Endothelial cell of umbilical vein (primary cell): ENCODE measurements at regions of chr2 and their contacts with region 1.

Region 1: DNA sequence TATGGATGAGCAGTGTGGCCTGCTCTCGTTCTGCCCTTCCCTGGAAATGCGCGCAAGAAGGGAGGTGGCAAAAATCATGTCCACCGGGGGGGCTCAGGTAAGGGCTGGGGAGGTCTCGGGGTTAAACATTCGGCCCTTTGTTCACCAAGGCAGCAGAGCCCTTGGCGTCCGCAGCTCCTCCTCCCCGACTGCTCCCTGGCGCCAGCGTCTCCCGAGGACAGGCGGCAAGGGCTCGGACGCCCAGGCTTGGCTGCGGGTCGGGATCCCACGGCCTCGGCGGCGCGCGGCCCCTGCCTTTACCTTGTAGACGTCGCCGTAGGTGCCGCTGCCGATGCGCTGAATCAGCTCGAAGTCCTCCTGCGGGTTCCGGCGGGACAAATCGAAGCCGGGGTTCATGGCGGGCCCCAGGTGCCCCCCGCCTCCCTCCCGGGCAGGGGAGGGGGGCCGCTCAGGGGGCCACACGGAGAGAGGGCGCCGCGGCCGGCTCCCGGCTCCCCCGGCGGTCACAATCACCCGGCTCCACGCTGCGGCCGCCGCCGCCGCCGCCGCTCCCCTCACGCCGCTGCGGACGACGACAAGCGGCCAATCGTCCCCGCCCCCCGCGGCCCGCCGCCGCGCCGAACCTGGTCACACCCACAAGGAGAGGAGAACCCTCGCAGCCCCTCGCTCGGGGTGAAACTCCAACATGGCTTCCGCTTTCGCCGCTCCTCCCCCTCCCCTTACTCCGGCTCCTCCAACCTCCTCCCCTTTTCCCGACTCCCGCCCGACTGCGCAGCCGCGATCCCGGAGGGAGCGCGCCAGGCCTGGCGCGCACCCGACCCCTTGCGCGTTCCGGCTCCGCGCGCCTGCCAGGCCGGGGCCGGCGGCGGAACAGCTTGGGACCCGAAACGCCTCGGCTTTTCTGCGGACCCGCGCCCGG is at the start of gene MAP4K3:
- DNase-seq: peak; percentile 95
- H3K4me3 ChIP-seq: peak within 1 kb of the TSS; percentile 48 to 83 (median 56)
- H3K27ac ChIP-seq: peak within 1 kb of the TSS; percentile 73
- H3K4me1 ChIP-seq: peaks cover 35% of the 10 kb centered on the region
- H3K27me3 ChIP-seq: no peaks in the 10 kb centered on the region
- CTCF ChIP-seq: no peak
- POLR2A ChIP-seq: peak; percentile 59
- total RNA-seq, gene MAP4K3: 45.9 and 46.2 TPM in 2 replicates

Region 2: DNA sequence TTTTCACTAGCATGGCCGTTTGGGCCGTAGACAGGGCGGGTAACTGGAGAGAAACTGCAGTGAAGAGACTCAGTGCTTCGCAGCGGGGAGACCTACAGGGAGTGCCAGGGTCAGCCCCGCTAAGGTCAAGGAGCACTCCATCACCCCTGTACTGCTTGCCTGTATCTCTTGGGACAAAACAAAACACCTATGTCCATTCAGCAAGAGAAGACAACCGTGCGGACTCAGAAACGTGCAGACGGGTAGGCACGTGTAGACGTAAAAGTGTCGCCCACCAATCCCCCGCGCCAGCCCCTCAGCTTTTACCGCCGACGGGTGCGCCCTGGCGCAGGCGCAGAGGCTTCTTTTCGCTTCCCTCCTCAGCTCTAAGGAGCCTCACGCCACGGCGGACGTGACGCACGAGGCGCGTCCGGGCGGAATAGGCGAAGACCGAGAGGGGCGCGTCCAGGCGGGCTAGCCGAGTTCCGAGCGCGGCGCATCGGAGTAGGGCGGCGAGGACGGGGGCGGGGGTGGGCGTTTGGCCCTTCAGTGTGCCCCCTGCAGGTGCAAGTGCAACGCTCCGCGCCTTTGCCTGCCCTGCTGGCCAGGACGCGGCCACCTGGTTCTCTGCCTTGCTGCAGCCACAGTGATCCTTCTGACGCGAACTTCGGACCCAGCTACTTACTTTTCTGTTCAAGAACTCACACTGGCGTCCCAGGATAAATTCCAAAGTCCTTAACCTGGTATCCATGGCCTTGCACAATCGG is 312.7 kb before region 1 on chr2:
- CTCF ChIA-PET with region 1: no interaction called
- POLR2A ChIA-PET with region 1: no interaction called
- dilution Hi-C with region 1: no loop called
- intact Hi-C with region 1: loop called (anchors 5 kb)
- DNase-seq: peak; percentile 97
- H3K4me3 ChIP-seq: peak overlapping the region; percentile 53 to 96 (median 89)
- H3K27ac ChIP-seq: peak overlapping the region; percentile 45
- H3K4me1 ChIP-seq: peaks cover 18% of the 10 kb centered on the region
- H3K27me3 ChIP-seq: no peaks in the 10 kb centered on the region
- CTCF ChIP-seq: peak; percentile 28 to 86
- POLR2A ChIP-seq: peak; percentile 96

Region 3: DNA sequence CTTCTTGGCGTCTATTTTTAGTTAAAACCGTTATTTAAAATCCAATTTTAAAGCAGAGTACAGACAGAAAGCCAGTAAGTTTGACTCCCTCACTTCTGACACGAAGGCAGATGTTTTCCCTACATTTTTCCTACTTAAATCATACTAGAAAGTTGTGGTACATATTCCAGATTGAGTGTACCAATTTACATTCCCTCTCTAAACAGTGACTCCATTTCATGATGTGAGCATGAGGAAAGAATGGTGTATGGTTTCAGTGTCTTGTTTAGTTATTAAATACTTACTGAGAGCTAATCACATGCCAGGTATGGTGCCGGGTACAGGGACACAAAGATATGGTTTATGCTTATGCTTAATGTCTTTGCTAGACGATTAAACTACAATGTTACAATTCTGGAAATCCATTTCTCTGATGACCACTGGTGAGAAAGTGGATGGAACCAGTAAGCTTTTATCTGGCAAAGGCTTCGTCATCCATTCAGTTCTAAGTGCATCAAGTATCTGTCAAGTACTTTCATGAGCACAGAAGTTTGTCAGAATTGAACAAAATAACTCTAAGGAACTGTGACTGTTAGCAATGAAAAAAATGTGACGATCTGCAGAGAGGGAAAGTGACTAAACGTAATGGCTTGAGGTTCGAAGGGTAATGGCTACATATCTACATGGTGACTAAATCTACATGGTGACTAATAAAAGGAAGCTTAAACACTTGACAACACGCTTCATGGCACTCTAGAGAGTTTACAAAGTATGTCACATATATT is 25.5 kb before region 1 on chr2:
- CTCF ChIA-PET with region 1: interaction called, 5 read pairs
- POLR2A ChIA-PET with region 1: no interaction called
- dilution Hi-C with region 1: no loop called
- intact Hi-C with region 1: loop called (anchors 1 kb)
- DNase-seq: peak; percentile 71
- H3K4me3 ChIP-seq: peak overlapping the region in 1 of 3 experiments; percentile 34
- H3K27ac ChIP-seq: peak overlapping the region; percentile 43
- H3K4me1 ChIP-seq: peaks cover 36% of the 10 kb centered on the region
- H3K27me3 ChIP-seq: no peaks in the 10 kb centered on the region
- CTCF ChIP-seq: no peak
- POLR2A ChIP-seq: no peak

Region 4: GRCh38 chr2:39469807-39470206 is 33.0 kb after region 1 on chr2:
- CTCF ChIA-PET with region 1: interaction called, 6 read pairs
- POLR2A ChIA-PET with region 1: no interaction called
- dilution Hi-C with region 1: no loop called
- intact Hi-C with region 1: loop called (anchors 1 kb)
- DNase-seq: peak; percentile 73
- H3K4me3 ChIP-seq: no peak overlapping the region
- H3K27ac ChIP-seq: peak overlapping the region; percentile 49
- H3K4me1 ChIP-seq: peaks cover 36% of the 10 kb centered on the region
- H3K27me3 ChIP-seq: no peaks in the 10 kb centered on the region
- CTCF ChIP-seq: no peak
- POLR2A ChIP-seq: no peak

Region 5: DNA sequence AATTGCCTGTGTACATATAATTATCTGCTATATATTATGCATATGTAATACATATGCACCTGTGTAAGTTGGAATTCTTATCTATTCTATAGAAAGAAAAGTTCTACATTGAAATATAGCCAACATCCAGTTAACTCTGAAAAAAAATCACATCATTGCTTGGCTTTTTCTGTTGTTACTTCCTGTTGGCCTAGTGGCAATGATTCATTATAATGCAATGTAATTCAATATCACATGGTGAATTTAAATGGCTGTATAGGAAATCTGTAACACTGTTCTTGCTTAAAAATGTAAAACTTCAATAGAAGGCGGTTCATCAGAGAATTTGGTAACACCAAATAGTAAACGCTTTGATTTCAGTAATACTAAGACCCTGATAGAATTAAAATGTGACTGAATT is 44.8 kb after region 1 on chr2:
- CTCF ChIA-PET with region 1: interaction called, 3 read pairs
- POLR2A ChIA-PET with region 1: no interaction called
- dilution Hi-C with region 1: no loop called
- intact Hi-C with region 1: loop called (anchors 1 kb)
- DNase-seq: peak; percentile 78
- H3K4me3 ChIP-seq: peak overlapping the region in 1 of 3 experiments; percentile 13
- H3K27ac ChIP-seq: peak overlapping the region; percentile 84
- H3K4me1 ChIP-seq: peaks cover 46% of the 10 kb centered on the region
- H3K27me3 ChIP-seq: no peaks in the 10 kb centered on the region
- CTCF ChIP-seq: no peak
- POLR2A ChIP-seq: no peak

Region 6: GRCh38 chr2:39568561-39569006 is 131.7 kb after region 1 on chr2:
- CTCF ChIA-PET with region 1: no interaction called
- POLR2A ChIA-PET with region 1: no interaction called
- dilution Hi-C with region 1: no loop called
- intact Hi-C with region 1: loop called (anchors 1 kb)
- DNase-seq: peak; percentile 89
- H3K4me3 ChIP-seq: peak overlapping the region in 1 of 3 experiments; percentile 11
- H3K27ac ChIP-seq: peak overlapping the region; percentile 83
- H3K4me1 ChIP-seq: peaks cover 20% of the 10 kb centered on the region
- H3K27me3 ChIP-seq: no peaks in the 10 kb centered on the region
- CTCF ChIP-seq: no peak
- POLR2A ChIP-seq: no peak

Region 7: DNA sequence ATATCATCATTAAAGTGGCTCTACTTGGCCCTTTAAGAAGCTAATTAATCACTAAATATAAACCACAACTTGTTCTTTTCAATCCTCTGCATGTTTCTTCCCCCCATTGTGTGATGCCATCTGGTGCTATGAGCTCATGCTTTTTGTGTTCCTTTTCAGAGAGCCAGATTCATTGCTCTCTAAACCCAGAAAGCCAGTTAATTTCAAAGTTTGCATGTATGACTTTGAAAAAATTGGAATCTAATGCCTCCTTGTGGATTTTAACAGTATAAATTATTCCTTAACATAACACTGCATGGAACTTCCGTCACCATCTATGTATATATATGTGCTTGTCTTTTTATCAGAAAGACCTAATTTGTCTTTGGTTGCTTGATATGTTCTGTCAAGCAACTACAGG is 260.0 kb after region 1 on chr2:
- CTCF ChIA-PET with region 1: interaction called, 10 read pairs
- POLR2A ChIA-PET with region 1: no interaction called
- dilution Hi-C with region 1: no loop called
- intact Hi-C with region 1: loop called (anchors 1 kb)
- DNase-seq: peak; percentile 84
- H3K4me3 ChIP-seq: no peak overlapping the region
- H3K27ac ChIP-seq: peak overlapping the region; percentile 13
- H3K4me1 ChIP-seq: peaks cover 18% of the 10 kb centered on the region
- H3K27me3 ChIP-seq: no peaks in the 10 kb centered on the region
- CTCF ChIP-seq: peak in 1 of 2 donors; percentile 17
- POLR2A ChIP-seq: no peak